CD14-positive monocyte (primary cell): ENCODE measurements at regions of chr12 and their contacts with region 1.

Region 1: GRCh38 chr12:100266835-100267618 is at the starts of genes DEPDC4 and SCYL2:
- DNase-seq: peak; percentile 95 to 96 (median 95)
- H3K4me3 ChIP-seq: peak within 1 kb of the TSS; percentile 79 to 87 (median 82)
- H3K4me3 Mint-ChIP-seq: peak within 1 kb of the TSS; percentile 99 to 100
- H3K27ac ChIP-seq: peak within 1 kb of the TSS; percentile 94 to 95
- H3K27ac Mint-ChIP-seq: peak within 1 kb of the TSS; percentile 95 to 99 (median 99)
- H3K4me1 ChIP-seq: peaks cover 32 to 40% of the 10 kb centered on the region in 2 donors
- H3K4me1 Mint-ChIP-seq: peaks cover 37% of the 10 kb centered on the region
- H3K27me3 ChIP-seq: no peaks in the 10 kb centered on the region
- H3K27me3 Mint-ChIP-seq: peaks cover 0 to 2% (median 0%) of the 10 kb centered on the region in 3 donors
- CTCF ChIP-seq: no peak
- polyA plus RNA-seq, gene DEPDC4: 0.25 TPM in 1 of 3 donors, not detected in the others
- polyA plus RNA-seq, gene SCYL2: 16.5 to 25.5 (median 20.4) TPM

Region 2: GRCh38 chr12:100142851-100143559 is 124.0 kb before region 1 on chr12 and contains the start of gene BLTP3B:
- intact Hi-C with region 1: loop called (anchors 5 to 10 kb)
- DNase-seq: peak; percentile 76 to 88 (median 88)
- H3K4me3 ChIP-seq: peak within 1 kb of the TSS; percentile 79 to 98 (median 91)
- H3K4me3 Mint-ChIP-seq: peak within 1 kb of the TSS; percentile 94 to 97
- H3K27ac ChIP-seq: peak within 1 kb of the TSS; percentile 91 to 98
- H3K27ac Mint-ChIP-seq: peak within 1 kb of the TSS; percentile 96 to 99 (median 98)
- H3K4me1 ChIP-seq: peaks cover 37 to 50% of the 10 kb centered on the region in 2 donors
- H3K4me1 Mint-ChIP-seq: peaks cover 45% of the 10 kb centered on the region
- H3K27me3 ChIP-seq: no peaks in the 10 kb centered on the region
- H3K27me3 Mint-ChIP-seq: peaks cover 0 to 4% (median 1%) of the 10 kb centered on the region in 3 donors
- CTCF ChIP-seq: no peak
- polyA plus RNA-seq, gene BLTP3B: 22.0 to 42.5 (median 33.4) TPM

Region 3: GRCh38 chr12:100200463-100201181 is 66.4 kb before region 1 on chr12 and contains the start of gene ACTR6:
- intact Hi-C with region 1: loop called (anchors 5 kb)
- DNase-seq: peak; percentile 84 to 91 (median 88)
- H3K4me3 ChIP-seq: peak within 1 kb of the TSS; percentile 71 to 84 (median 81)
- H3K4me3 Mint-ChIP-seq: peak within 1 kb of the TSS; percentile 97 to 98
- H3K27ac ChIP-seq: peak within 1 kb of the TSS; percentile 38 to 79
- H3K27ac Mint-ChIP-seq: peak within 1 kb of the TSS; percentile 86 to 97 (median 95)
- H3K4me1 ChIP-seq: peaks cover 13 to 26% of the 10 kb centered on the region in 2 donors
- H3K4me1 Mint-ChIP-seq: peaks cover 17% of the 10 kb centered on the region
- H3K27me3 ChIP-seq: peaks cover 0 to 6% of the 10 kb centered on the region in 2 donors
- H3K27me3 Mint-ChIP-seq: peaks cover 5 to 6% (median 6%) of the 10 kb centered on the region in 3 donors
- CTCF ChIP-seq: no peak
- polyA plus RNA-seq, gene ACTR6: 5.5 to 17.8 (median 16.2) TPM

Region 4: GRCh38 chr12:100573292-100574186 is 306.5 kb after region 1 on chr12 and contains the start of gene GAS2L3:
- intact Hi-C with region 1: loop called in 1 of 2 experiments (anchors 10 kb)
- DNase-seq: peak; percentile 92 to 94 (median 93)
- H3K4me3 ChIP-seq: peak within 1 kb of the TSS; percentile 60 to 97 (median 82)
- H3K4me3 Mint-ChIP-seq: peak within 1 kb of the TSS; percentile 94 to 97
- H3K27ac ChIP-seq: peak within 1 kb of the TSS; percentile 85 to 89
- H3K27ac Mint-ChIP-seq: peak within 1 kb of the TSS; percentile 88 to 97 (median 95)
- H3K4me1 ChIP-seq: peaks cover 19 to 28% of the 10 kb centered on the region in 2 donors
- H3K4me1 Mint-ChIP-seq: peaks cover 17% of the 10 kb centered on the region
- H3K27me3 ChIP-seq: no peaks in the 10 kb centered on the region
- H3K27me3 Mint-ChIP-seq: peaks cover 0 to 1% (median 0%) of the 10 kb centered on the region in 3 donors
- CTCF ChIP-seq: no peak
- polyA plus RNA-seq, gene GAS2L3: 0.53 to 1.6 (median 1.1) TPM